ENCODE measurements at regions of chr4 and their contacts with region 1.

Region 1: DNA sequence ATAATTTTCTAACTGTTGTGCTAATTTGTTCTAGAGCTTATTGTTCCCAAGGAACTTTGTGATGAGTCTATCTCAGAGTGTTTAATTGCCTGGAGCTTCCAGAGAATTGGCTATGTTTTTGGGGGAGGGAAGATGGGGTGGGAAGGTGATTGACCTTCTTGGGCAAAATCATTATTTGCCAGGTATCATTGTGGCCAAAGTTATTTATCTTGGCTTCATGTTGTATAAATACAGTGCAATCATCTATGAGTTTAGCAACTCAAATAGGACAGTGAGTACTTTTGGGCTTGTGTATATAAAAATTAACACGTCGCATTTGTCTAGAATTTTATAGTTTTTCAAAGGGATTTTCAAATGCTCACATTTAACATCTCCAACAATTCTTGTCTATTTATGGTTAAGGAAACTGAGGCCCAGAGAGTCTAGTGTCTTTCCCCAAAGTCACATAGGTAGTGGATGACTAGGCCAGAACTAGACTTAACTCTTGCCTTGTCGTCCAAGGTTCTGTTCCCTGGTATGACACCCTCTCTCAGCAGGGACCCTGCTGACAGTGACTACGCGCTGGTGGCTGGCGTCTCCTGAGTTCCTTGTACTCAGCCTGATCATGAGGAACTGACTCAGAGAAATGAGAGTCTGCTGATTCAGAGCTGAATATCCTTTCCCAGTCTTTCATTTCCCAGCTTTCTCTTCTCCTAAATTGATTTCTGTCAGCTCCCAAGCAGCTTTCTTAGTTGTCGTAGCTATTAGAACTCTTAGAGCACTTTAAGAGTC is 27.7 kb downstream of the FNIP2 start:
- DNase-seq: no peak
- ATAC-seq: no peak
- H3K4me3 ChIP-seq: no peak overlapping the region
- H3K27ac ChIP-seq: no peak overlapping the region
- H3K4me1 ChIP-seq: no peaks in the 10 kb centered on the region
- H3K27me3 ChIP-seq: no peaks in the 10 kb centered on the region
- CTCF ChIP-seq: no peak
- EP300 ChIP-seq: no peak
- POLR2A ChIP-seq: no peak
- RAD21 ChIP-seq: no peak

Region 2: DNA sequence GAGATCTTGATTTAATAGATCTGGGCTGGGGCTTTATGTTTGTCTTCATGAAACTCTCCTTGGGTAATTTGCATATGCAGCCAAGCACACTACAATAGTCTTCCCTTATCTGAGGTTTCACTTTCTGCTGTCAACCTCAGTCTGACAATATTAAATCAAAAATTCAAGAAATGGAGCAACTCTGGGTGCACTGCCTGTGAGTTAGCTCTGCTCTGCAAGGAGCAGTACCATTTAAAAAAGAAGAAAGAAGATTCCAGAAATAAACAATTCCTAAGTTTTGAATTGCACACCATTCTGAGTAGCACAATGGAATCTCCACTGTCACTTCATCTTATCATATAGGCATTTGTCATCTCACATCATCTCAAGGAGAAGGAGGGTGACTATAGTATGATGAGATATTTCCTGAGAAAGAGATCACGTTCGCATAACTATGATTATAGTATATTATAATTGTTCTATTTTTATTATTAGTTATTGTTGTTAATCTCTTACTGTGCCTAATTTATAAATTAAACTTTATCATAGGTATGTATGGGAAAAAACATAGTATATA is 18.3 kb before region 1 on chr4:
- CTCF ChIA-PET with region 1: interaction called, 8 read pairs
- POLR2A ChIA-PET with region 1: interaction called, 3 read pairs
- RAD21 ChIA-PET with region 1: interaction called, 11 read pairs
- SMC1A ChIA-PET with region 1: interaction called, 291 read pairs
- in situ Hi-C with region 1: no loop called
- intact Hi-C with region 1: no loop called
- DNase-seq: peak; percentile 60
- ATAC-seq: peak; percentile 96
- H3K4me3 ChIP-seq: no peak overlapping the region
- H3K27ac ChIP-seq: no peak overlapping the region
- H3K4me1 ChIP-seq: peaks cover 10% of the 10 kb centered on the region; the same call in 1 of the 2 replicates
- H3K27me3 ChIP-seq: 0 out of 4 replicates have a peak, but pooled peaks cover 0 to 2% of the 10 kb centered on the region in 2 experiments
- CTCF ChIP-seq: no peak
- EP300 ChIP-seq: no peak
- POLR2A ChIP-seq: no peak
- RAD21 ChIP-seq: no peak

Region 3: GRCh38 chr4:158786121-158786601 is 10.4 kb before region 1 on chr4:
- CTCF ChIA-PET with region 1: interaction called, 10 read pairs
- POLR2A ChIA-PET with region 1: interaction called, 9 read pairs
- RAD21 ChIA-PET with region 1: interaction called, 11 read pairs
- SMC1A ChIA-PET with region 1: interaction called, 291 read pairs
- in situ Hi-C with region 1: no loop called
- intact Hi-C with region 1: no loop called
- DNase-seq: no peak
- ATAC-seq: no peak
- H3K4me3 ChIP-seq: no peak overlapping the region
- H3K27ac ChIP-seq: peak overlapping the region; percentile 22; the same call in 1 of the 2 replicates
- H3K4me1 ChIP-seq: no peaks in the 10 kb centered on the region
- H3K27me3 ChIP-seq: no peaks in the 10 kb centered on the region
- CTCF ChIP-seq: no peak
- EP300 ChIP-seq: no peak
- POLR2A ChIP-seq: no peak
- RAD21 ChIP-seq: no peak

Region 4: GRCh38 chr4:158823461-158823873 is 26.9 kb after region 1 on chr4:
- CTCF ChIA-PET with region 1: interaction called, 4 read pairs
- POLR2A ChIA-PET with region 1: interaction called, 5 read pairs
- RAD21 ChIA-PET with region 1: interaction called, 4 read pairs
- SMC1A ChIA-PET with region 1: interaction called, 18 read pairs
- in situ Hi-C with region 1: no loop called
- intact Hi-C with region 1: no loop called
- DNase-seq: no peak
- ATAC-seq: no peak
- H3K4me3 ChIP-seq: no peak overlapping the region
- H3K27ac ChIP-seq: no peak overlapping the region
- H3K4me1 ChIP-seq: peaks cover 22% of the 10 kb centered on the region
- H3K27me3 ChIP-seq: no peaks in the 10 kb centered on the region
- CTCF ChIP-seq: no peak
- EP300 ChIP-seq: no peak
- POLR2A ChIP-seq: no peak
- RAD21 ChIP-seq: no peak

Measured in GM12878 (cell line).